ENCODE measurements at regions of chr4 and their contacts with region 1.

Region 1: DNA sequence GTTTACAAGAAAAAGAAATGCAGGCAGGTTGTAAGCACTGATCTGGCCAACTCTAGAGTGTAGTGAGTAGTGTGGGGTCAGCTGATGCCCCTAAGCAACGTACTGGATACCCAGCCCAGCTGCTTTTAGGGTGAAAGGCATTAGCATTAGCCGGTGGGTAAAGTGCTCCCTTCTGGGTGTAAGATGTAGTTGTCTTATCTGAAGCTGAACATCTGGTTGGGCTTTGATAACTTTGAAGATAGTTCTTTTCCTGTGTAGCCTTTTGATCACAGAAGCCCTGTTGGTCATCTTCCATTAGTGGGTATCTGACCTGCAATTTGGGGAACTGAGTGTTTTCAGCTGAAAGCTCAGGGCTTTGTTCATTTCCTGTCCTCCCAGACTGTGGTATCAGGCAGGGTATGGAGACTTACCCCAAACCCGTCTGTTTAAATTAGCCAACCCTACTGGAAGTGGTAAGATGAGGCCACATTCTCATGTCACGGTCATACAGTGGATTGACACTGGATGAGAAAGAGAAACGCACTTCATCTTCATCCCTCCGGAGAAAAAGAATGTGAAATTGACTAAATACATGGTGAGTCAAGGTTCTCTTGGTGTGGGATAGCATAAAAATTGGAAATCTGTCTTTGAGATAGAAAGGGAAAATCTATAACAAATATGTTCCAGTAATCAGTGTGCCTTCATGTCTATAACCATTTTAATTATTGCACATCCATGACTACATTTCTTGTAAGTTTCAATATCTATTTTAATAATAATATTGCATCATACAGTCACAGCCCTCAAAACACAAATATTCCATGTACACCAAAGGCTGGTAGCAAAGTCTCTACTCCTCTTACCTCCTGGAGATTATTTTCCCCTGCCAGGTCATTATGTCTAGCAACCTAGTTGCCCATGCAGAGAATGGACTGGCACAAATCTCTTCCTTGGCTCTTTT is 8.7 kb downstream of the RHOH start:
- DNase-seq: no peak
- ATAC-seq: peak; percentile 51
- H3K4me3 Mint-ChIP-seq: peak overlapping the region; percentile 71
- H3K27ac Mint-ChIP-seq: peak overlapping the region; percentile 92
- H3K4me1 Mint-ChIP-seq: peaks cover 92% of the 10 kb centered on the region
- H3K27me3 Mint-ChIP-seq: no peaks in the 10 kb centered on the region
- CTCF ChIP-seq: no peak

Region 2: DNA sequence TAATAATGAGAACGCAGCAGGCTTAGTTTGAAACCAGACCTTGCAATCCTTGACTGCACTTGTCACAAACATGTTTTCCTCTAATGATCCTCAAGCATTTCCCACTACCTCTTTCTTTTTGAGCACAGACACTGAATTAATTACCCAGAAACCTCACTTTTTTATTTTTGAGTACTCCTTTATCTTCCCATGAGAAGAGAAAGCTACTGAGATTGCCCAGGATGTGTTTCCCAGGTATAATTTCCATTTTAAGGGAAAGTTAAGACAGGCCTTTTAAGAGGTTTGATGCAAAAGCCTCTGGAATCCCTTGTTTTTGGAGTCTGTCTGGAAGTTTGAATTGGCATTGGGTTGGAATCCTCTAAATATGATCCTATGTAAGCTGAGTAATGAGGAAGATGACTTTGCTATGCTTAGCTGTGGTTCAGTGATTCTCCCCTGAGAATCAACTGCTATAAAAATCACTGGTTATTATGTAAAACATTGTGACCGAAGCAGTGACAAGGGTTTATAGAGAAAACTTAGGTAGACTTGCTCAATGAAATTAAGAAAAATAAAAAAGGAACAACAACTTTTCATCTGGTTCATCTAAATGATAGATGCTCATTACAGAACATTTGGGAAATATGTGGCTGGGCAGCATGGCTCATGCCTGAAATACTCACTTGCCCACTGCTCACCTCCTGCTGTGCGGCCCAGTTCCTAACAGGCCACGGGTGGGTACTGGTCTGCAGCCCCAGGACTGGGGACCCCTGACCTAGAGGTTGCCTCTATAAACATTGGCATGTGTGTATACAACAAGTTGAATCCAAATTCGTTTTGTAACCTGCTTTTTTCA is 19.5 kb before region 1 on chr4:
- CTCF ChIA-PET with region 1: interaction called, 3 read pairs
- POLR2A ChIA-PET with region 1: interaction called, 457 read pairs
- intact Hi-C with region 1: loop called (anchors 2 kb)
- DNase-seq: no peak
- ATAC-seq: peak; percentile 78
- H3K4me3 Mint-ChIP-seq: peak overlapping the region; percentile 80
- H3K27ac Mint-ChIP-seq: peak overlapping the region; percentile 91
- H3K4me1 Mint-ChIP-seq: peaks cover 88% of the 10 kb centered on the region
- H3K27me3 Mint-ChIP-seq: no peaks in the 10 kb centered on the region
- CTCF ChIP-seq: no peak

Region 3: GRCh38 chr4:40193016-40193571 is 12.4 kb before region 1 on chr4:
- CTCF ChIA-PET with region 1: interaction called, 3 read pairs
- POLR2A ChIA-PET with region 1: interaction called, 457 read pairs
- intact Hi-C with region 1: loop called (anchors 1 kb)
- DNase-seq: no peak
- ATAC-seq: peak; percentile 28
- H3K4me3 Mint-ChIP-seq: peak overlapping the region; percentile 97
- H3K27ac Mint-ChIP-seq: peak overlapping the region; percentile 95
- H3K4me1 Mint-ChIP-seq: peaks cover 83% of the 10 kb centered on the region
- H3K27me3 Mint-ChIP-seq: no peaks in the 10 kb centered on the region
- CTCF ChIP-seq: no peak

Region 4: GRCh38 chr4:40221744-40222143 is 16.2 kb after region 1 on chr4:
- CTCF ChIA-PET with region 1: interaction called, 3 read pairs
- POLR2A ChIA-PET with region 1: interaction called, 12 read pairs
- intact Hi-C with region 1: loop called (anchors 2 kb)
- DNase-seq: no peak
- ATAC-seq: no peak
- H3K4me3 Mint-ChIP-seq: peak overlapping the region; percentile 26
- H3K27ac Mint-ChIP-seq: peak overlapping the region; percentile 70
- H3K4me1 Mint-ChIP-seq: peaks cover 94% of the 10 kb centered on the region
- H3K27me3 Mint-ChIP-seq: no peaks in the 10 kb centered on the region
- CTCF ChIP-seq: no peak